Mammary epithelial cell (primary cell): ENCODE measurements at regions of chr3 and their contacts with region 1.

Region 1: GRCh38 chr3:168847291-168847883 is 751.7 kb upstream of the GOLIM4 start:
- DNase-seq: peak; percentile 20
- H3K4me3 ChIP-seq: no peak overlapping the region
- H3K27ac ChIP-seq: no peak overlapping the region
- H3K4me1 ChIP-seq: no peaks in the 10 kb centered on the region
- H3K27me3 ChIP-seq: peaks cover 16% of the 10 kb centered on the region
- CTCF ChIP-seq: peak; percentile 48 to 68

Region 2: DNA sequence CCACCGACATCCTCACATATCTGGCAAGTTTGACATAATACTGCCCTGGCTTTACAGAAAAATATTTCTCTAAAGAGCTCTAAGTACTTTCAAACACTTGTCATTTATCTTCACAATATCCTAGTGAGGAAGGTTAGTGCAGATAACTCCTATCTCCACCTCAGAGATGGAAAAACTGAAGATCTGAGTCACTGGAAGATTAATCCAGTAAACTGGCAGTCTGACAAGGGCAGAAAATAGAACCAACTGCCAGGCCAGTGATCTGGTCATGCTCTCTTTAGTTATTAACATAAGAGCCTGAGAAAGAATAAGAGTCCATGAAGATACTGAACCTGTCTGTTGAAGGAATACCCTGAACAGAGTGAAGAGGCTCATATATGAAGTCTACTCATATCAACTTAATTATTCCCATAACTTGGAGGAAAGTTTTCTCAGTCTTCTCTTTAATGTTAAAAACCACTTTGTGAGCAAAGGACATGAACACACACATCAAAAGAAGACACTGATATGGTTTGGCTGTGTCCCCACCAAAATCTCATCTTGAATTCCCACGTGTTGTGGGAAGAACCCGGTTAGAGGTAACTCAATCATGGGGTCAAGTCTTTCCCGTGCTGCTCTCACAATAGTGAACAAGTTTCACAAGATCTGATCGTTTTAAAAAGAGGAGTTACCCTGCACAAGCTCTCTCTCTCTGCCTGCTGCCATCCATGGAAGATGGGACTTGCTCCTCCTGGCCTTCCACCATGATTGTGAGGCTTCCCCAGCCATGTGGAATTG is 813.0 kb before region 1 on chr3:
- CTCF ChIA-PET with region 1: no interaction called
- dilution Hi-C with region 1: no loop called
- in situ Hi-C with region 1: no loop called
- intact Hi-C with region 1: loop called (anchors 10 kb)
- DNase-seq: peak; percentile 7
- H3K4me3 ChIP-seq: no peak overlapping the region
- H3K27ac ChIP-seq: no peak overlapping the region
- H3K4me1 ChIP-seq: no peaks in the 10 kb centered on the region
- H3K27me3 ChIP-seq: no peaks in the 10 kb centered on the region
- CTCF ChIP-seq: no peak

Region 3: GRCh38 chr3:168047190-168047795 is 800.1 kb before region 1 on chr3:
- CTCF ChIA-PET with region 1: no interaction called
- dilution Hi-C with region 1: no loop called
- in situ Hi-C with region 1: no loop called
- intact Hi-C with region 1: loop called (anchors 5 kb)
- DNase-seq: peak; percentile 73
- H3K4me3 ChIP-seq: no peak overlapping the region
- H3K27ac ChIP-seq: no peak overlapping the region
- H3K4me1 ChIP-seq: no peaks in the 10 kb centered on the region
- H3K27me3 ChIP-seq: no peaks in the 10 kb centered on the region
- CTCF ChIP-seq: peak; percentile 83 to 85

Region 4: DNA sequence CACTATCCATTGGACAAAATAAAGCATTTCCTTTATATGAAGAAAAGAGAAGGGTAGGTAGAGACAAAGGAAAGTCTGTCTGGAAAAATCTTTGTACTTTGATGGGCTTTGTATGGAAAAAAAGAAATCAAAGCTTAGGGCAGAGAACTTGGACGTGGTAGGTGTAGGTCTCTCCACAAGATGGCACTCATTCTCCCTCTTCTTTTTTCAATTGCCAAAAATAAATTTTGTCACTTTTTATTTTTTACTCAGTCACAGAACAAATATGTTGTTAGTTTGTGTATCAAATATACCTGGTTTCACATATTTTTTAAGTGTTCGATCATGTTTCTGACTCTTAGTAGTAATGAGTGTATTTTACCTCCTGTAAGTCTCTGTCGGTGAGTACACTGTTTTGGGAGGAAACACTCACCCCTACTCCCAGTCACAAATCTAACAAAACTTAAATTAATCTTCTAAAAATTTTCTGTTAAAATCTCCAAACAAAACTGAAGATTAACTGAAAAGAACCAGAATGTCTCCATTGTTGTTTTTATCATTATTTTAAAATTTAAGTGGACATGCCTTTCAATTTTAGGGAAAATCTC is 335.9 kb before region 1 on chr3:
- CTCF ChIA-PET with region 1: no interaction called
- dilution Hi-C with region 1: no loop called
- in situ Hi-C with region 1: loop called (anchors 5 to 25 kb)
- intact Hi-C with region 1: loop called (anchors 1 kb)
- DNase-seq: no peak
- H3K4me3 ChIP-seq: no peak overlapping the region
- H3K27ac ChIP-seq: no peak overlapping the region
- H3K4me1 ChIP-seq: no peaks in the 10 kb centered on the region
- H3K27me3 ChIP-seq: peaks cover 2% of the 10 kb centered on the region
- CTCF ChIP-seq: peak; percentile 56 to 64

Region 5: GRCh38 chr3:168620826-168621225 is 226.6 kb before region 1 on chr3:
- CTCF ChIA-PET with region 1: no interaction called
- dilution Hi-C with region 1: no loop called
- in situ Hi-C with region 1: no loop called
- intact Hi-C with region 1: loop called (anchors 5 kb)
- DNase-seq: no peak
- H3K4me3 ChIP-seq: no peak overlapping the region
- H3K27ac ChIP-seq: no peak overlapping the region
- H3K4me1 ChIP-seq: no peaks in the 10 kb centered on the region
- H3K27me3 ChIP-seq: no peaks in the 10 kb centered on the region
- CTCF ChIP-seq: peak; percentile 34 to 36

Region 6: DNA sequence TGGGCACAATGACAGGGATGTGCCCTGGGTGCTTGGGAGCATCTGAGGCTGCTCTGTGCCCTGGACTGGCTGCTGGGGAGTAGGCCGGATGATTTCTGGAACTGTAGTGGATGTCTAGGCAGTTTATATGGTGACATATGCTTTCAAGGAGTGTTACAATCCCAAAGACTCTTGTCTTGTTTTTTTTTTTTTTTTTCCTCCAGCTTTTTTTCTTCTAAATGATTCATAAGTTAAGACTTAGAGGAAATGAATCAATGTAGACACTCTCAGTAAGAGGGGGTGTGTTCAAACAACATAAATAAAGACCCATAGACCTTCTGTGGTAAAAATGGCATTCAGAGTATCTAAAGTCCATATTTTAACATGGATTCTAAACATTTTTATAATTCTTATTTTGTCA is 45.6 kb before region 1 on chr3:
- CTCF ChIA-PET with region 1: no interaction called
- dilution Hi-C with region 1: no loop called
- in situ Hi-C with region 1: no loop called
- intact Hi-C with region 1: no loop called
- DNase-seq: peak; percentile 56
- H3K4me3 ChIP-seq: no peak overlapping the region
- H3K27ac ChIP-seq: no peak overlapping the region
- H3K4me1 ChIP-seq: peaks cover 11% of the 10 kb centered on the region
- H3K27me3 ChIP-seq: no peaks in the 10 kb centered on the region
- CTCF ChIP-seq: no peak

Region 7: DNA sequence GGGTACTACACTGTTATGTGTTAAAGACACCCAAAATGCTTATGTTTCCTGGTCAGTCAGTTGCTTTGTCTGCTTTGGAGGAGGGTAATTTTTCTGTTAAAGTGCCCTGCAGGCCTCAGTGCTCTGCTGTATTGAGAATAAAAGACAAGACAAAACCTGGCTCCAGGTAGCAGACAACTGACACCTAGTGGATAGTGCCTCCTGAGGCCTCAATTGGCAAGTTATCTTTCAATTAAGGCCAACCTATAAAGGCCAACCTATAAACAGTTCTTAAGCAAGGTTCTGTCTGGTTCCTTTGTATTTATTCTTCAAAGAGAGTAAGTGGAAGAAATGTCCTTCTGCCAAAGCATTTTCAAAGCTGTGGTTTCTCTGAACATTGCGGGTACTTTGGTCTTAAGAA is 42.3 kb after region 1 on chr3:
- CTCF ChIA-PET with region 1: no interaction called
- dilution Hi-C with region 1: no loop called
- in situ Hi-C with region 1: no loop called
- intact Hi-C with region 1: no loop called
- DNase-seq: peak; percentile 29
- H3K4me3 ChIP-seq: no peak overlapping the region
- H3K27ac ChIP-seq: no peak overlapping the region
- H3K4me1 ChIP-seq: peaks cover 4% of the 10 kb centered on the region
- H3K27me3 ChIP-seq: no peaks in the 10 kb centered on the region
- CTCF ChIP-seq: peak; percentile 38 to 62